ENCODE measurements at regions of chr15 and their contacts with region 1.

Region 1: GRCh38 chr15:76311100-76311953 is at the start of gene ETFA:
- DNase-seq: peak; percentile 97
- H3K4me3 ChIP-seq: peak within 1 kb of the TSS; percentile 99
- H3K27ac ChIP-seq: peak within 1 kb of the TSS; percentile 87
- H3K4me1 ChIP-seq: no peaks in the 10 kb centered on the region
- H3K27me3 ChIP-seq: no peaks in the 10 kb centered on the region
- CTCF ChIP-seq: no peak
- total RNA-seq, gene ETFA: 133 and 137 TPM in 2 replicates

Region 2: GRCh38 chr15:76169802-76170800 is 141.2 kb before region 1 on chr15:
- CTCF ChIA-PET with region 1: no interaction called
- POLR2A ChIA-PET with region 1: interaction called, 16 read pairs
- intact Hi-C with region 1: no loop called
- DNase-seq: no peak
- H3K4me3 ChIP-seq: no peak overlapping the region
- H3K27ac ChIP-seq: no peak overlapping the region
- H3K4me1 ChIP-seq: no peaks in the 10 kb centered on the region
- H3K27me3 ChIP-seq: no peaks in the 10 kb centered on the region
- CTCF ChIP-seq: no peak

Measured in A673 (cell line).